ENCODE measurements at regions of chr1 and their contacts with region 1.

Region 1: GRCh38 chr1:85884372-85885035 is 176.3 kb upstream of the ZNHIT6 start:
- DNase-seq: no peak
- H3K4me3 ChIP-seq: no peak overlapping the region
- H3K27ac ChIP-seq: no peak overlapping the region
- H3K27me3 ChIP-seq: no peaks in the 10 kb centered on the region
- CTCF ChIP-seq: peak; percentile 74

Region 2: DNA sequence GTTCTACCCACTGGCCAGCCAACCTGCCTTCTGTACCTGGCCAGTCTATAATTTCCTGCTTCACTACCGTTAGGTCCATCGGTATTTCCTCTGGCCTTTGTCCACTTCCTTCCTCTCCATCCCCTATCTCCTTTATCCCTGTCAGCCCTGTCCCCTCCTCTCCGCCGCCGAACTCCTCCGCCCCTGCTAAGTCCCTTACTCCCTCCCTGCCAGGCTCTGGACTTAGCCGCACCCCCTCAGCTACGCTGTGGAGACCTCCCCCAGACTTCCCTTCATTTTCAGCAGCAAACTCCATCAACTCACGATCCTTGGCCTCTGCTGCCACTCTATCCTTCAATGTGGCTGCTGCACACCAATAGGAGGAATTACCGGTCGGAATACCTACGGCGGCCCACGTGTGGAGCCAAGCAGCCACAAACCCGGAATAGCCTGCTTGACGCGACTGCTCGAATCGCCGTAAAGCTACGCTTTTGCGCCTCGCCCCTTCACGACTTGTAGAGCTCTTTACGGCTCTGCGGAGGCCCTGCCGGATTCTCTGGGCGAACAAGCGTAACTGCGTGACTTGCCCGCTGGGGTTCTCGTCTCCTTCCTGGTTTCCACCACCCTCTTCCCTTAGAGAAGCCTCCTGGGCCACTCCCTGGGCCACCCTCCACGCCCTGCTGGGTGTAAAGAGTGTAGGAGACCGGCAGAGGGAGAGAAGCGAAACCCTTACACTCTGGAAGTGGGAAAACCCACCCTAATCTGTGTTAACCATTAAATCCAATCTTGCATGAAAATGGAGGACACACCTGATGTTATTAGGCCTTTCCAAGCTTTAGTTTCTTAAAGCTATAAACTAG is 176.3 kb before region 1 on chr1 and contains the start of gene ZNHIT6:
- CTCF ChIA-PET with region 1: interaction called, 14 read pairs
- POLR2A ChIA-PET with region 1: no interaction called
- DNase-seq: peak; percentile 89
- H3K4me3 ChIP-seq: peak within 1 kb of the TSS; percentile 93
- H3K27ac ChIP-seq: peak within 1 kb of the TSS; percentile 84
- H3K27me3 ChIP-seq: no peaks in the 10 kb centered on the region
- CTCF ChIP-seq: peak; percentile 56
- polyA plus RNA-seq, gene ZNHIT6: 18.9 and 19.2 TPM in 2 replicates

Region 3: GRCh38 chr1:85718678-85719340 is 165.7 kb before region 1 on chr1:
- CTCF ChIA-PET with region 1: no interaction called
- POLR2A ChIA-PET with region 1: no interaction called
- DNase-seq: no peak
- H3K4me3 ChIP-seq: no peak overlapping the region
- H3K27ac ChIP-seq: no peak overlapping the region
- H3K27me3 ChIP-seq: no peaks in the 10 kb centered on the region
- CTCF ChIP-seq: no peak